Activated CD4-positive, alpha-beta T cell treated with anti-CD3 and anti-CD28 coated beads for 36 hours (primary cell): ENCODE measurements at regions of chr9 and their contacts with region 1.

Region 1: GRCh38 chr9:77997611-77998284 is 33.9 kb downstream of the GNAQ start:
- DNase-seq: no peak
- ATAC-seq: no peak
- H3K4me3 Mint-ChIP-seq: no peak overlapping the region
- H3K27ac Mint-ChIP-seq: no peak overlapping the region
- H3K4me1 Mint-ChIP-seq: peaks cover 38% of the 10 kb centered on the region
- H3K27me3 Mint-ChIP-seq: no peaks in the 10 kb centered on the region

Region 2: GRCh38 chr9:77841739-77842386 is 155.9 kb before region 1 on chr9:
- CTCF ChIA-PET with region 1: no interaction called
- POLR2A ChIA-PET with region 1: no interaction called
- intact Hi-C with region 1: no loop called
- DNase-seq: no peak
- ATAC-seq: peak; percentile 57
- H3K4me3 Mint-ChIP-seq: no peak overlapping the region
- H3K27ac Mint-ChIP-seq: no peak overlapping the region
- H3K4me1 Mint-ChIP-seq: peaks cover 11% of the 10 kb centered on the region
- H3K27me3 Mint-ChIP-seq: no peaks in the 10 kb centered on the region

Region 3: GRCh38 chr9:77987081-77987656 is 10.6 kb before region 1 on chr9:
- CTCF ChIA-PET with region 1: interaction called, 11 read pairs
- POLR2A ChIA-PET with region 1: no interaction called
- intact Hi-C with region 1: no loop called
- DNase-seq: no peak
- ATAC-seq: no peak
- H3K4me3 Mint-ChIP-seq: no peak overlapping the region
- H3K27ac Mint-ChIP-seq: peak overlapping the region; percentile 7
- H3K4me1 Mint-ChIP-seq: peaks cover 59% of the 10 kb centered on the region
- H3K27me3 Mint-ChIP-seq: no peaks in the 10 kb centered on the region